ENCODE measurements at regions of chr15 and their contacts with region 1.

Region 1: GRCh38 chr15:60326824-60327654 is 70.7 kb downstream of the ANXA2 start:
- DNase-seq: peak in 7 of 9 donors; percentile 24 to 62 (median 56)
- ATAC-seq: peak; percentile 60
- H3K4me3 ChIP-seq: no peak overlapping the region
- H3K4me3 Mint-ChIP-seq: no peak overlapping the region
- H3K27ac ChIP-seq: no peak overlapping the region
- H3K27ac Mint-ChIP-seq: peak overlapping the region in 1 of 9 donors; percentile 2
- H3K4me1 ChIP-seq: no peaks in the 10 kb centered on the region
- H3K4me1 Mint-ChIP-seq: peaks cover 0 to 14% (median 4%) of the 10 kb centered on the region in 7 donors
- H3K27me3 ChIP-seq: peaks cover 0 to 10% of the 10 kb centered on the region in 2 donors
- H3K27me3 Mint-ChIP-seq: peaks cover 19 to 71% (median 35%) of the 10 kb centered on the region in 5 donors

Region 2: DNA sequence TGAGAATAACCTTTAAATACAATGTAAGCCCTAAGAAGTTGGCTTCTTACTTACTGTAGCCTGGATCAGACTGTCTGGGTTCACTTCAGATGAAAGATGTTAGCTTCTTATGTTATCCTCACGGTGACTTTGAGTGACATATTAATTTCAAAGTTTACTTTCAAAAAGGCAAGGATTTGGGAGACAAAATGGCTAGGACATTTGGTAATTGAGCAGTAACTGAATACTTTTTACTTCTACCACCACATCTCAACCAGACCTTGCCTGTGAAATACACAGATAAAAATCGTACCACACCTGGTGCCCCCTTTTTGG is 601.9 kb before region 1 on chr15:
- CTCF ChIA-PET with region 1: interaction called, 24 read pairs
- POLR2A ChIA-PET with region 1: no interaction called
- intact Hi-C with region 1: loop called (anchors 1 kb)
- DNase-seq: no peak
- ATAC-seq: no peak
- H3K4me3 ChIP-seq: no peak overlapping the region
- H3K4me3 Mint-ChIP-seq: no peak overlapping the region
- H3K27ac ChIP-seq: no peak overlapping the region
- H3K27ac Mint-ChIP-seq: no peak overlapping the region
- H3K4me1 ChIP-seq: no peaks in the 10 kb centered on the region
- H3K4me1 Mint-ChIP-seq: peaks cover 0 to 3% (median 0%) of the 10 kb centered on the region in 7 donors
- H3K27me3 ChIP-seq: no peaks in the 10 kb centered on the region
- H3K27me3 Mint-ChIP-seq: peaks cover 0 to 30% (median 0%) of the 10 kb centered on the region in 5 donors

Region 3: GRCh38 chr15:59741274-59741906 is 585.6 kb before region 1 on chr15:
- CTCF ChIA-PET with region 1: interaction called, 6 read pairs
- POLR2A ChIA-PET with region 1: no interaction called
- intact Hi-C with region 1: loop called in 1 of 2 experiments (anchors 1 kb)
- DNase-seq: no peak
- ATAC-seq: no peak
- H3K4me3 ChIP-seq: no peak overlapping the region
- H3K4me3 Mint-ChIP-seq: no peak overlapping the region
- H3K27ac ChIP-seq: no peak overlapping the region
- H3K27ac Mint-ChIP-seq: no peak overlapping the region
- H3K4me1 ChIP-seq: no peaks in the 10 kb centered on the region
- H3K4me1 Mint-ChIP-seq: no peaks in the 10 kb centered on the region
- H3K27me3 ChIP-seq: peaks cover 0 to 4% of the 10 kb centered on the region in 2 donors
- H3K27me3 Mint-ChIP-seq: peaks cover 6 to 18% (median 9%) of the 10 kb centered on the region in 5 donors

Region 4: GRCh38 chr15:59997070-59997701 is 329.9 kb before region 1 on chr15:
- CTCF ChIA-PET with region 1: no interaction called
- POLR2A ChIA-PET with region 1: no interaction called
- intact Hi-C with region 1: loop called in 1 of 2 experiments (anchors 2 kb)
- DNase-seq: peak in 5 of 9 donors; percentile 34 to 74 (median 51)
- ATAC-seq: peak; percentile 70
- H3K4me3 ChIP-seq: no peak overlapping the region
- H3K4me3 Mint-ChIP-seq: peak overlapping the region; percentile 32 to 82 (median 48)
- H3K27ac ChIP-seq: no peak overlapping the region
- H3K27ac Mint-ChIP-seq: peak overlapping the region in 2 of 9 donors; percentile 10 to 69
- H3K4me1 ChIP-seq: peaks cover 7 to 19% of the 10 kb centered on the region in 2 donors
- H3K4me1 Mint-ChIP-seq: peaks cover 24 to 73% (median 48%) of the 10 kb centered on the region in 7 donors
- H3K27me3 ChIP-seq: peaks cover 41 to 85% of the 10 kb centered on the region in 2 donors
- H3K27me3 Mint-ChIP-seq: peaks cover 87 to 98% (median 93%) of the 10 kb centered on the region in 5 donors

Region 5: GRCh38 chr15:60091165-60091564 is 235.9 kb before region 1 on chr15:
- CTCF ChIA-PET with region 1: no interaction called
- POLR2A ChIA-PET with region 1: no interaction called
- intact Hi-C with region 1: no loop called
- DNase-seq: no peak
- ATAC-seq: no peak
- H3K4me3 ChIP-seq: no peak overlapping the region
- H3K4me3 Mint-ChIP-seq: no peak overlapping the region
- H3K27ac ChIP-seq: no peak overlapping the region
- H3K27ac Mint-ChIP-seq: peak overlapping the region in 1 of 9 donors; percentile 13
- H3K4me1 ChIP-seq: no peaks in the 10 kb centered on the region
- H3K4me1 Mint-ChIP-seq: peaks cover 0 to 4% (median 0%) of the 10 kb centered on the region in 7 donors
- H3K27me3 ChIP-seq: no peaks in the 10 kb centered on the region
- H3K27me3 Mint-ChIP-seq: peaks cover 0 to 38% (median 10%) of the 10 kb centered on the region in 5 donors

Region 6: GRCh38 chr15:60414016-60414682 is 87.1 kb after region 1 on chr15:
- CTCF ChIA-PET with region 1: no interaction called
- POLR2A ChIA-PET with region 1: no interaction called
- intact Hi-C with region 1: no loop called
- DNase-seq: no peak
- ATAC-seq: no peak
- H3K4me3 ChIP-seq: no peak overlapping the region
- H3K4me3 Mint-ChIP-seq: no peak overlapping the region
- H3K27ac ChIP-seq: no peak overlapping the region
- H3K27ac Mint-ChIP-seq: no peak overlapping the region
- H3K4me1 ChIP-seq: peaks cover 0 to 3% of the 10 kb centered on the region in 2 donors
- H3K4me1 Mint-ChIP-seq: peaks cover 0 to 2% (median 0%) of the 10 kb centered on the region in 7 donors
- H3K27me3 ChIP-seq: no peaks in the 10 kb centered on the region
- H3K27me3 Mint-ChIP-seq: no peaks in the 10 kb centered on the region

Measured in naive thymus-derived CD4-positive, alpha-beta T cell (primary cell).